CD4-positive, alpha-beta memory T cell (primary cell): ENCODE measurements at regions of chr11 and their contacts with region 1.

Region 1: GRCh38 chr11:75525596-75526541 is at the start of gene GDPD5:
- DNase-seq: peak; percentile 89 to 94 (median 92)
- H3K4me3 ChIP-seq: peak within 1 kb of the TSS; percentile 65 to 67
- H3K4me3 Mint-ChIP-seq: peak within 1 kb of the TSS; percentile 89 to 98 (median 92)
- H3K27ac ChIP-seq: peak within 1 kb of the TSS; percentile 62
- H3K27ac Mint-ChIP-seq: peak within 1 kb of the TSS; percentile 82 to 96 (median 91)
- H3K4me1 ChIP-seq: peaks cover 44% of the 10 kb centered on the region
- H3K4me1 Mint-ChIP-seq: peaks cover 33 to 72% (median 48%) of the 10 kb centered on the region in 4 donors
- H3K27me3 ChIP-seq: no peaks in the 10 kb centered on the region
- H3K27me3 Mint-ChIP-seq: no peaks in the 10 kb centered on the region
- total RNA-seq, gene GDPD5: 141 to 160 TPM

Region 2: GRCh38 chr11:75399344-75400145 is 126.3 kb before region 1 on chr11 and contains the start of gene RPS3:
- CTCF ChIA-PET with region 1: interaction called, 183 read pairs
- POLR2A ChIA-PET with region 1: interaction called, 13 read pairs
- intact Hi-C with region 1: loop called (anchors 1 kb)
- DNase-seq: peak; percentile 87 to 89 (median 88)
- H3K4me3 ChIP-seq: peak within 1 kb of the TSS; percentile 71 to 93
- H3K4me3 Mint-ChIP-seq: peak within 1 kb of the TSS; percentile 88 to 98 (median 96)
- H3K27ac ChIP-seq: peak within 1 kb of the TSS; percentile 83
- H3K27ac Mint-ChIP-seq: peak within 1 kb of the TSS; percentile 96 to 99 (median 98)
- H3K4me1 ChIP-seq: peaks cover 38% of the 10 kb centered on the region
- H3K4me1 Mint-ChIP-seq: peaks cover 31 to 55% (median 40%) of the 10 kb centered on the region in 4 donors
- H3K27me3 ChIP-seq: no peaks in the 10 kb centered on the region
- H3K27me3 Mint-ChIP-seq: peaks cover 0 to 1% of the 10 kb centered on the region in 2 donors
- total RNA-seq, gene RPS3: 4,846 to 5,053 TPM

Region 3: DNA sequence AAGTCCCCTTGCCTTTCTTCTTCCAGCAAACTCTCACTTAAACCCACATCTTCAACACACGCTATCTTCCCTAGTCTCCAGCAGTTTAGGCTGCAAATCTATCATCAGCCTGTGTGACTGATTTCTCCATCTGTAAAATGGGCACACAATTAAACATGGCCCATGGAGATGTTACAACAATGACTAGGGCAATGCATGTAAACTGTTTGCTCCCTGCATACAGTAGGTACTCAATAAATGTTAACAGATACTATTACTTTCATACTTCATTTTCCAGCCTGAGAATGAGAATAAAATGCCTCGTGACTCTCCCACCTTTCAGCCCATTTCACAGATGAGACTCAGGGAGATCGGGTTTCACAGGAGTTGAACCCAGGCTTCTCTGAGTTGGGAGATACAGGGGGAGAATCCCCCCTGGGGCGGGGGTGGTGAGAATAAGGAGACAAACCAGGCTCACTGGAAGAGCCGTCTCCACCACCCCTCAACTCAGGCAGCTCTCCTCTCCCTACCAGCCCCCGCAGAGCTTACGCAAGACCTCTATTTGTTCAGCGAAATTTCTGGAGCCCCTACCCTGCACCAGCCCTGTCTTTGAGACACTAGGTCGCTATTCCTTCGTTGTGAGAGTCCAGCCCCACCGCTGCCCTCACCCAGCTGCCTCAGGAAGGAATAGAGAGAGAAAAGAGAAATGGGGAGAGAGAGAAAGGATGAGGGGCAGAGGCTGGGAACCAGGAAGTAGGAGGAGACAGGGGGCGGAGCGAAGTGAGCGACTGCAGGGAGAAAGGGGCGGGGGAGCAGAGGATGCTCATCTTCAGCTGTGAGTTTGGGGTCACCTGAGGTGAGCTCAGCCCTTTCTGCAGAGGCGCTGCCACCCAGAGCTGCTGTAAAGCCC is 50.7 kb before region 1 on chr11:
- CTCF ChIA-PET with region 1: interaction called, 6 read pairs
- POLR2A ChIA-PET with region 1: interaction called, 5 read pairs
- intact Hi-C with region 1: loop called (anchors 1 kb)
- DNase-seq: peak; percentile 41 to 69 (median 46)
- H3K4me3 ChIP-seq: no peak overlapping the region
- H3K4me3 Mint-ChIP-seq: peak overlapping the region in 7 of 8 donors; percentile 26 to 74 (median 52)
- H3K27ac ChIP-seq: peak overlapping the region; percentile 22
- H3K27ac Mint-ChIP-seq: peak overlapping the region; percentile 86 to 94 (median 90)
- H3K4me1 ChIP-seq: peaks cover 24% of the 10 kb centered on the region
- H3K4me1 Mint-ChIP-seq: peaks cover 17 to 23% (median 23%) of the 10 kb centered on the region in 4 donors
- H3K27me3 ChIP-seq: no peaks in the 10 kb centered on the region
- H3K27me3 Mint-ChIP-seq: no peaks in the 10 kb centered on the region

Region 4: GRCh38 chr11:75508044-75508561 is 17.8 kb before region 1 on chr11:
- CTCF ChIA-PET with region 1: interaction called, 14 read pairs
- POLR2A ChIA-PET with region 1: interaction called, 23 read pairs
- intact Hi-C with region 1: loop called (anchors 1 kb)
- DNase-seq: peak; percentile 76 to 89 (median 83)
- H3K4me3 ChIP-seq: peak overlapping the region in 1 of 2 donors; percentile 8
- H3K4me3 Mint-ChIP-seq: peak overlapping the region; percentile 38 to 86 (median 72)
- H3K27ac ChIP-seq: peak overlapping the region; percentile 64
- H3K27ac Mint-ChIP-seq: peak overlapping the region; percentile 91 to 99 (median 97)
- H3K4me1 ChIP-seq: peaks cover 63% of the 10 kb centered on the region
- H3K4me1 Mint-ChIP-seq: peaks cover 33 to 91% (median 55%) of the 10 kb centered on the region in 4 donors
- H3K27me3 ChIP-seq: no peaks in the 10 kb centered on the region
- H3K27me3 Mint-ChIP-seq: no peaks in the 10 kb centered on the region

Region 5: DNA sequence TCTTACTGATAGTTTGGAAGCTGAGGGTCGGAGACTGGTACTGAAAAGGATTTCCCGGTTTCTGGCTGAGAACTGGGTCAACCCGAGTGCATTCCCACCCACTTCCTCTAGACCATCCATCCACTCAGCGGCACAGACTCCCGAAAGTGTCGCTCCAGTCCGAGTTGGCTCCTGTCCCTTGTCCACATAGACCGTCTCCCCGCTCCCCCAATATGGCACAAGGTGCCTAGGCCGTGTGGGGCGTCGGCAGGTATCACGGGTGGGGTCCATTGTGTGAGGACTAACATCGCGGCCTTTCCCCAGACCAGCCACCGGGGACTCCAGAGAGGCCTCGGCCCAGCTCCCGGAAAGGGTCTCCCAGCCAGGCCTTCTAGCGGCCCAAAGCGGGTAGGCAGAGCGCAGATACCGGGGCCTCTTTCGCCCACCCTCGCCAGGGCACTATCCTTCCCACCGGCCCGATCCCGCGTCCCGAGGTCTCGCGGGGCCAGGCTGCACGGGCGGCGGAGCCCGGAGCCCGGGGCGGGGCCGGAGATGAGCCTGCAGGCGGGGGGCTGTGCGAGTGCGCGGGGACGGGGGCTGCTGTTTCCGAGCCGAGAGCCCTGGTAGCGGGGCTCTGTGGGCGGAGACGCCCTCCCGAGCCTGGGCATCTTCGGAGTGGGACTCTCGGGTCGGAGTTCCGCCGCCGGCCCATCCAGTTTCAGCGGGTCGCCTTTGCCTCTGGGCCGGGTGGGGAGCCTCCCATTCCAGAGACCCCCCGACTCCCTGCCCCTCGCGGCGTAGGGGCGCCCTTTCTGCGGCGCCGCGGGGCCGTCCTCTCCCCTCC is 57.2 kb after region 1 on chr11:
- CTCF ChIA-PET with region 1: no interaction called
- POLR2A ChIA-PET with region 1: no interaction called
- intact Hi-C with region 1: loop called (anchors 1 kb)
- DNase-seq: peak; percentile 15 to 68 (median 44)
- H3K4me3 ChIP-seq: peak overlapping the region; percentile 58 to 67
- H3K4me3 Mint-ChIP-seq: peak overlapping the region; percentile 76 to 89 (median 86)
- H3K27ac ChIP-seq: peak overlapping the region; percentile 54
- H3K27ac Mint-ChIP-seq: peak overlapping the region in 6 of 7 donors; percentile 42 to 89 (median 80)
- H3K4me1 ChIP-seq: peaks cover 11% of the 10 kb centered on the region
- H3K4me1 Mint-ChIP-seq: peaks cover 8 to 19% (median 15%) of the 10 kb centered on the region in 4 donors
- H3K27me3 ChIP-seq: no peaks in the 10 kb centered on the region
- H3K27me3 Mint-ChIP-seq: peaks cover 0 to 2% of the 10 kb centered on the region in 2 donors

Region 6: DNA sequence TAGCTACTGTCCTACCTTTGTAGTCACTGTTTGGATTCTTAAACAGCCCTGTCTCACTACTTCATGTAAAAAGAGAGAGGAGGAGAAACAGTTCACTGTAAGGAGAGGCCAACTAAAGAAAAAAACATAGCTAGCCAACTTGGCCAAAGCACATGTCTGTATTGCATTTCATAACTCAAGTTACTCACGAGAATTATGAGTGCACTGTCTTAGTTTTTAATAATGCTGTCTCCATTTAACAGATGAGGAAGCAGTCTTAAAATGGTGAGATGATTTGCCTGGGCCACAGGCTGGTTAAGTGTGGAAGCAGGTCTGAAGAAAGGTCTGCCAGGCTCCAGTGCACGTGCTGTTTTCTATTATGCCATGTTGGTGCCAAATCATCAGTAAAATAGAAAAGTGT is 393.7 kb after region 1 on chr11:
- CTCF ChIA-PET with region 1: no interaction called
- POLR2A ChIA-PET with region 1: no interaction called
- intact Hi-C with region 1: no loop called
- DNase-seq: no peak
- H3K4me3 ChIP-seq: no peak overlapping the region
- H3K4me3 Mint-ChIP-seq: no peak overlapping the region
- H3K27ac ChIP-seq: no peak overlapping the region
- H3K27ac Mint-ChIP-seq: peak overlapping the region in 2 of 7 donors; percentile 32 to 37
- H3K4me1 ChIP-seq: no peaks in the 10 kb centered on the region
- H3K4me1 Mint-ChIP-seq: peaks cover 3 to 12% (median 7%) of the 10 kb centered on the region in 4 donors
- H3K27me3 ChIP-seq: no peaks in the 10 kb centered on the region
- H3K27me3 Mint-ChIP-seq: no peaks in the 10 kb centered on the region

Region 7: DNA sequence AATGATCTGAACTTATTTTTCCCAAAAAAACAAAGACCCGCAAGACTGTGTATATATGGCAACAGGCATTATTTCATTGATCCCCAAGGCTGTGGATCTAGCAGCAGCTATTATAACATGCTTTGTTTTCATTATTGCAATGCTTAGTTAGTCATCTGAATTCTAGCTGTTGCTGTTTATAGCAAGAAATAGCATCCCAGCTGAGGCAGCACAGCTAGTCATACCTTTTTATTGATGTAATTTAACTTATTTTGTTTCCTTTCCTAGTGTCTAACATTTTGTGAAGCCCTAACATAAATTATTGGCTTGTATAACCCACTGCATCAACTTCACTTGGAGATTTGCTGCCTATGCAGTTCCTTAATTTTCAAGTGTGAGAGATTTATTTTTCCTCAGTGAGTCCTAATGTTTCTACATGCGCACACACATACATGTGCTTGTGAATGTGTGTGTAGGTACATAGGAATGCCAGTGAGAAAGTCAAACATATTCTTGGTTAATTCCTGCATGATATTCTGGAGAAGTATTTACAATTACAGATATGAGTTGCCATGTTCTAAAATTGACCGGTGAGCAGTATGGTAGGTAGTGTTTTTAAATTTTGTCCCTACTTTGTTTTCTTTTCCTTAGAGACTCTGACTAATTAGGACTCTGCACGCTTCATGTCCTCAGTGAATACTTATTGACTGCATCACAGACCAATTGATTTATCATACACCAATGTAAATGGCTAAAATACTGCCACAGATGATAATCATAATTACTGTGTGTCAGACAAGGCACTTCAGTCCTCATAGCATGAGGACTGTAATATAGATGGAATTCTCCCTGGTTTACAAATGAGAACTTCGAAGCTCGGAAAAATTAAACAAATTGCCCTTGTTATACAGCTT is 561.1 kb after region 1 on chr11:
- CTCF ChIA-PET with region 1: no interaction called
- POLR2A ChIA-PET with region 1: no interaction called
- intact Hi-C with region 1: no loop called
- DNase-seq: no peak
- H3K4me3 ChIP-seq: no peak overlapping the region
- H3K4me3 Mint-ChIP-seq: no peak overlapping the region
- H3K27ac ChIP-seq: no peak overlapping the region
- H3K27ac Mint-ChIP-seq: no peak overlapping the region
- H3K4me1 ChIP-seq: no peaks in the 10 kb centered on the region
- H3K4me1 Mint-ChIP-seq: no peaks in the 10 kb centered on the region
- H3K27me3 ChIP-seq: no peaks in the 10 kb centered on the region
- H3K27me3 Mint-ChIP-seq: no peaks in the 10 kb centered on the region